T-cell (primary cell): ENCODE measurements at regions of chr15 and their contacts with region 1.

Region 1: GRCh38 chr15:55714064-55714463 is 28.9 kb downstream of the PRTG start:
- DNase-seq: no peak
- ATAC-seq: no peak
- H3K4me3 ChIP-seq: no peak overlapping the region
- H3K4me3 Mint-ChIP-seq: no peak overlapping the region
- H3K27ac ChIP-seq: no peak overlapping the region
- H3K27ac Mint-ChIP-seq: no peak overlapping the region
- H3K4me1 ChIP-seq: peaks cover 0 to 3% of the 10 kb centered on the region in 2 experiments
- H3K4me1 Mint-ChIP-seq: no peaks in the 10 kb centered on the region
- H3K27me3 ChIP-seq: no peaks in the 10 kb centered on the region
- H3K27me3 Mint-ChIP-seq: peaks cover 4 to 15% of the 10 kb centered on the region in 2 donors

Region 2: GRCh38 chr15:55673287-55673686 is 40.8 kb before region 1 on chr15:
- CTCF ChIA-PET with region 1: no interaction called
- POLR2A ChIA-PET with region 1: no interaction called
- DNase-seq: no peak
- ATAC-seq: no peak
- H3K4me3 ChIP-seq: no peak overlapping the region
- H3K4me3 Mint-ChIP-seq: no peak overlapping the region
- H3K27ac ChIP-seq: no peak overlapping the region
- H3K27ac Mint-ChIP-seq: no peak overlapping the region
- H3K4me1 ChIP-seq: no peaks in the 10 kb centered on the region
- H3K4me1 Mint-ChIP-seq: no peaks in the 10 kb centered on the region
- H3K27me3 ChIP-seq: no peaks in the 10 kb centered on the region
- H3K27me3 Mint-ChIP-seq: peaks cover 3 to 12% of the 10 kb centered on the region in 2 donors

Region 3: DNA sequence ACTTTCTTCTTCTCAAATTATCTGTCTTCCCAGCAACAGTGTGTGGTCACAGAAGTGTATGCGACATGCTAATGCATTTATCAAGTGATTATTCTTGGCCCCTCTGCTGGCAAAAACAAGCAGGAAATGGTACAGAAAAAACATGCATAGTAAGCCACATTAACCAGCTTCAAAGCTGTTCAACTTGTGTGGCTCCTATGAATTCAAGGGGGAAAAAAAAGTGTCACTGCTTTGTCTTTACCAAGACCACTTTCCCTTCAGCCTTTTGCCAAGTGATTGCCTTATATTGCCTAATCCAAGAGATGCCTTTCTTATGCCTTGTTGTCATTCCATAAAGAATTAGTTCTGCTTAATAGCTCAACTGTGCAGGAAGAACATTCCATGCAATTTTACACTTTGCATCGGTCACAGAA is 10.2 kb before region 1 on chr15:
- CTCF ChIA-PET with region 1: no interaction called
- POLR2A ChIA-PET with region 1: no interaction called
- DNase-seq: peak in 1 of 35 experiments; percentile 4
- ATAC-seq: no peak
- H3K4me3 ChIP-seq: no peak overlapping the region
- H3K4me3 Mint-ChIP-seq: no peak overlapping the region
- H3K27ac ChIP-seq: no peak overlapping the region
- H3K27ac Mint-ChIP-seq: no peak overlapping the region
- H3K4me1 ChIP-seq: no peaks in the 10 kb centered on the region
- H3K4me1 Mint-ChIP-seq: peaks cover 0 to 4% (median 4%) of the 10 kb centered on the region in 3 donors
- H3K27me3 ChIP-seq: peaks cover 0 to 6% of the 10 kb centered on the region in 2 experiments
- H3K27me3 Mint-ChIP-seq: peaks cover 3 to 16% of the 10 kb centered on the region in 2 donors

Region 4: DNA sequence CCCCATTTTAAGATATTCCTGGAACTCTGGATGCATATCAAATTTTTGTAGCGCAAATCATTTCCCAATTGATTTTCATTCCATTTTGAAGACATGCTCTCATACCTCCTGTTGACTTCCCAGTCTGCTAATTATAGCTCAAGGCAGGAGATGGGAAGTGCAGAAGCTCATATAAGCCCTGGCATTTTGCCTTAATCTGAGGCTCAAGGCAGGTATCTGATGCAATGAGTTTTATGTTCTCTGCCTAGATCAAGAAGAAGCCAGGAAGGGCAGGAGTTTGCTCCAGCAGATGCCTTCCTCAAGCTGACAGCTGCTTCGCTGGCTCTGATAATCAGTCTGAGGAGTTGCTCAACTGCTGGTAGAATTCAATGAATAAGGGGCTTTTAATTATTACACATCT is 344.9 kb after region 1 on chr15:
- CTCF ChIA-PET with region 1: no interaction called
- POLR2A ChIA-PET with region 1: interaction called in 1 of 2 experiments, 14 read pairs
- DNase-seq: no peak
- ATAC-seq: no peak
- H3K4me3 ChIP-seq: no peak overlapping the region
- H3K4me3 Mint-ChIP-seq: no peak overlapping the region
- H3K27ac ChIP-seq: no peak overlapping the region
- H3K27ac Mint-ChIP-seq: no peak overlapping the region
- H3K4me1 ChIP-seq: no peaks in the 10 kb centered on the region
- H3K4me1 Mint-ChIP-seq: no peaks in the 10 kb centered on the region
- H3K27me3 ChIP-seq: peaks cover 0 to 2% of the 10 kb centered on the region in 2 experiments
- H3K27me3 Mint-ChIP-seq: peaks cover 6 to 10% of the 10 kb centered on the region in 2 donors